H1 (cell line): ENCODE measurements at regions of chr1 and their contacts with region 1.

Region 1: DNA sequence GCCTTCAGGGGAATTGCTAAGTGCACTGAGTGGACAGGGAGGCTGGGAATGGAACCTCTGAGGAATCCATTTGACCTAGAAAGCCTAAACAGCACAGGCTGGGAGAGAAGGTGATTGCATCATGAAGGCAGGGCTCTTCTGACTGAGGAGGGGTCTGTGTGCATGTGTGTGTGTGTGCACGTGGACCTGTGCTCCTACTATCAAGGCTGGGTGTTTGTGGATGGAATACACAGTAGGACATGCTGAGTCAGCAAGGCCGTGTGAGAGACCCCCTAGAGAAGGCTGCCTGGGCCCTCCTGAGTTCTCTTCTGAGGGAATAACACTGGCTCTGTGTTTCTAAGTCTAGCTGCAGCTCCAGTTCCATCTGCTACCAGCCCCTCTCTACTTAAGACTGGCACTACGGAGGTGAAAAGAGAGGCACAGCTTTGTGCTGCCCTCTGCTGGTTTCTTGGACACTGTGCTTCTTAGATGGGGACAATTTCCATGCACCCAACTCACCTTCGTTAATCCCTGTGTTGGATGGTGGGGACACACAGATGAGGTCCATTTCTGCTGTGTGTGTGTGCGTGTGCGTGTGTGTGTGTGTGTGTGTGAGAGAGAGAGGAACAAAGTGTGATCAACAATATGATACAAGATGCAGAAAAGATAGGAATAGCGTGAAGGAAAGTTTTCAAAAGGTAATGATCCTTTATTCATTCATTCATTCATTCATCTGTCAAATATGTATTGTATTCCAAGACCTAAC is 6.2 kb upstream of the EFCAB14 start:
- DNase-seq: peak in 1 of 2 experiments; percentile 71
- H3K4me3 ChIP-seq: no peak overlapping the region
- H3K27ac ChIP-seq: no peak overlapping the region
- H3K4me1 ChIP-seq: peaks cover 2 to 4% (median 3%) of the 10 kb centered on the region in 4 experiments; a peak in 5 of 7 replicates
- H3K27me3 ChIP-seq: no peaks in the 10 kb centered on the region; a peak in 1 of 7 replicates
- CTCF ChIP-seq: peak; percentile 68 to 96 (median 84)
- EP300 ChIP-seq: no peak
- POLR2A ChIP-seq: peak in 1 of 2 experiments; percentile 30; a peak in 1 of 3 replicates
- RAD21 ChIP-seq: peak; percentile 80 to 91

Region 2: GRCh38 chr1:46742069-46742468 is 16.9 kb after region 1 on chr1:
- CTCF ChIA-PET with region 1: interaction called, 11 read pairs
- POLR2A ChIA-PET with region 1: interaction called, 3 read pairs
- DNase-seq: no peak
- H3K4me3 ChIP-seq: no peak overlapping the region
- H3K27ac ChIP-seq: no peak overlapping the region
- H3K4me1 ChIP-seq: no peaks in the 10 kb centered on the region
- H3K27me3 ChIP-seq: no peaks in the 10 kb centered on the region
- CTCF ChIP-seq: no peak
- EP300 ChIP-seq: no peak
- POLR2A ChIP-seq: no peak
- RAD21 ChIP-seq: no peak

Region 3: GRCh38 chr1:46755121-46755520 is 30.0 kb after region 1 on chr1:
- CTCF ChIA-PET with region 1: no interaction called
- POLR2A ChIA-PET with region 1: no interaction called
- DNase-seq: no peak
- H3K4me3 ChIP-seq: no peak overlapping the region
- H3K27ac ChIP-seq: no peak overlapping the region
- H3K4me1 ChIP-seq: peaks cover 4 to 13% (median 8%) of the 10 kb centered on the region in 4 experiments; a peak in 6 of 7 replicates
- H3K27me3 ChIP-seq: no peaks in the 10 kb centered on the region
- CTCF ChIP-seq: no peak
- EP300 ChIP-seq: no peak
- POLR2A ChIP-seq: no peak
- RAD21 ChIP-seq: no peak